ENCODE measurements at regions of chr3 and their contacts with region 1.

Region 1: GRCh38 chr3:48142316-48142870 is 45.8 kb downstream of the CDC25A start:
- DNase-seq: no peak
- H3K4me3 ChIP-seq: no peak overlapping the region
- H3K27ac ChIP-seq: peak overlapping the region in 3 of 8 donors; percentile 68 to 72 (median 68)
- H3K4me1 ChIP-seq: peaks cover 0 to 48% (median 18%) of the 10 kb centered on the region in 6 donors
- H3K27me3 ChIP-seq: no peaks in the 10 kb centered on the region
- CTCF ChIP-seq: no peak
- POLR2A ChIP-seq: no peak

Region 2: GRCh38 chr3:47612178-47612577 is 530.2 kb before region 1 on chr3:
- intact Hi-C with region 1: no loop called
- DNase-seq: no peak
- H3K4me3 ChIP-seq: no peak overlapping the region
- H3K27ac ChIP-seq: peak overlapping the region in 6 of 8 donors; percentile 0 to 35 (median 22)
- H3K4me1 ChIP-seq: peaks cover 0 to 23% (median 5%) of the 10 kb centered on the region in 6 donors
- H3K27me3 ChIP-seq: no peaks in the 10 kb centered on the region
- CTCF ChIP-seq: no peak
- POLR2A ChIP-seq: no peak

Region 3: GRCh38 chr3:48090166-48090939 is 52.0 kb before region 1 on chr3:
- intact Hi-C with region 1: loop called (anchors 10 kb)
- DNase-seq: no peak
- H3K4me3 ChIP-seq: no peak overlapping the region
- H3K27ac ChIP-seq: peak overlapping the region in 1 of 8 donors; percentile 96
- H3K4me1 ChIP-seq: peaks cover 13 to 40% (median 28%) of the 10 kb centered on the region in 6 donors
- H3K27me3 ChIP-seq: no peaks in the 10 kb centered on the region
- CTCF ChIP-seq: no peak
- POLR2A ChIP-seq: no peak

Measured in spleen (tissue), 13 donors.